Activated B cell treated with CpG ODN at 0.5 μM for 24 hours (primary cell): ENCODE measurements at regions of chr2 and their contacts with region 1.

Region 1: DNA sequence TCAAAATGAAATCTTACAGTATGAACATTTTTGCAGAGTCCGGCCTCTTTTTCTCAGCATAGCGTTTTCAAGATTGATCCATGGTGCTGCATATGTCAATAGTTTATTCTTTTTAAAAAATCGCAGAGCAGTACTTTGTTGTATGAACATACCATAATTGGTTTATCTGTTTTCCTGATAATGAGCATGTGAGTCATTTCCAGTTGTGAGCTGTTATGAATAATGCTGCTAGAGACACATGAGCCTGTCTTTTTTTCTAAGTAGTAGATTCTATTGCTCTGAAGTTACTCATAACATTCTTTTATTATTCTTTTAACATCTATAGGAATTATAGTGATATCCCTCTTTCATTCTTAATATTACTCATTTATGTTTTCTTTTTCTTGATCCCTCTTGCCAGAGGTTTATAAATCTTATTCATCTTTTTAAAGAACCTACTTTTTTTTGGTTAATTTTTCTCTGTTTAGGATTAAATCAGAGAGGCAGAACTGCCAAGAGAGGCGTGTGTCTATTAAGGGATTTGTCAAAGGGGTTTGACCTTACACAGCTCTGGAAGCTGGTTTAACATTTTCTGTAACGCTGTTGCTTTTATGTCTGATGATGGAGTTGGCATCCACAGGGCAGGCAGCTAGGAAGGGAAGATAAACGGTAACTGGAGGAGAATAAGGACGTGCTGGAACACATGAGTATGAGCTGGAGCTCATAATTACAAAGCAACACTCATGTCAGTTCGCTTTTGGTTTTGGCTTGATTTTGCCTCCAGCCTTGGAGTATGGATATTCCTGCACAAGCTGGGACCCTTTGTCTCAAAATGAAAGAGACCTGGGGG is 47.4 kb downstream of the MGAT5 start:
- DNase-seq: no peak
- ATAC-seq: no peak
- H3K4me3 Mint-ChIP-seq: no peak overlapping the region
- H3K27ac Mint-ChIP-seq: peak overlapping the region; percentile 46
- H3K4me1 Mint-ChIP-seq: peaks cover 75% of the 10 kb centered on the region
- H3K27me3 Mint-ChIP-seq: no peaks in the 10 kb centered on the region
- CTCF ChIP-seq: no peak

Region 2: GRCh38 chr2:134336352-134336751 is 35.0 kb after region 1 on chr2:
- CTCF ChIA-PET with region 1: no interaction called
- POLR2A ChIA-PET with region 1: no interaction called
- intact Hi-C with region 1: loop called (anchors 5 kb)
- DNase-seq: no peak
- ATAC-seq: peak; percentile 82
- H3K4me3 Mint-ChIP-seq: peak overlapping the region; percentile 12
- H3K27ac Mint-ChIP-seq: peak overlapping the region; percentile 57
- H3K4me1 Mint-ChIP-seq: peaks cover 64% of the 10 kb centered on the region
- H3K27me3 Mint-ChIP-seq: no peaks in the 10 kb centered on the region
- CTCF ChIP-seq: no peak